ENCODE measurements at regions of chr7 and their contacts with region 1.

Region 1: GRCh38 chr7:19146699-19147098 is 1.5 kb upstream of the FERD3L start:
- DNase-seq: no peak
- H3K4me3 Mint-ChIP-seq: no peak overlapping the region
- H3K27ac Mint-ChIP-seq: no peak overlapping the region
- H3K4me1 Mint-ChIP-seq: no peaks in the 10 kb centered on the region
- H3K27me3 Mint-ChIP-seq: peaks cover 43% of the 10 kb centered on the region

Region 2: DNA sequence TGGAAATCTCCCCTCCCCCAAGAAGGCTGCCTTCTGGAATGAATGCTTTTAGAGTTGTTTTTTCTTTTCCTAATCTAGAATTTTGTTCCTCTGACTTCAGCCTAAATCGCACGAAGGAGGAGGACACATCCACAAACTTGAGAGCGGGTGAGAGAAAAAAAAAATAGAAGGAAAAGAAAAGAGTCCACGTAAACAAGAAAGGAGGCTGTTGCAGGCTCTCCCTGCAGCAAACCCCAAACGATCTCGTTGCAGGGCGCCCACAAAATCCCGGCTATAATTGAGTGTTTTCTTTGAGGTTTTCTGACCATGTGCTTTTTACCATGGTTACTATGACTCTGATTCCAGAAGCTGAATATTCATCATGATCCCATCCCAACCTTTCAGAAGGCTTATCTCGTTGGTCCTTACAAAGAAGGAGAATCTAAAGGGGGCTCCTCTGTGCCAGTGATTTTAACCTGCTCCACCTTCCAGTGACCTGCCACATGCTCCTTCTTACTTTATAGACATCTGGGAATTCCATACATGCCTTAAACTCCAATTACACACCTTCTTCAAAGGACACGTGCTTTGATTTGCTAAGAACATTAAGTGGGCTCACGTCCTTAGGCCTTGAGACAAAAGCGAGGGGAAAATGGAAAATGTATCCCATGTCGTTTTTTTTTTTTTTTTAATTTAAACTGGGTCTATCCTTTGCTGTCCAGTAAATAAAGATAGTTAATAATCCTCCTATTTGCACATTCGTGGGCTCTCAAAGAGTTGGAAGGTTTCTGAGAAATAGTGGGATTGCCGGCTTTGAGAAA is 35.0 kb before region 1 on chr7:
- intact Hi-C with region 1: loop called (anchors 2 kb)
- DNase-seq: no peak
- H3K4me3 Mint-ChIP-seq: no peak overlapping the region
- H3K27ac Mint-ChIP-seq: no peak overlapping the region
- H3K4me1 Mint-ChIP-seq: peaks cover 3% of the 10 kb centered on the region
- H3K27me3 Mint-ChIP-seq: peaks cover 84% of the 10 kb centered on the region

Measured in activated T-helper 2 cell treated with anti-CD3 and anti-CD28 coated beads, Interferon-gamma antibody, Interleukin-2, Interleukin-4, amounts not matched to agents 10 μg/mL and 5 μg/mL and 100 μg/mL, durations not matched to agents 14 hours and 24 hours and 36 hours (primary cell).